ENCODE measurements at regions of chr17 and their contacts with region 1.

Region 1: DNA sequence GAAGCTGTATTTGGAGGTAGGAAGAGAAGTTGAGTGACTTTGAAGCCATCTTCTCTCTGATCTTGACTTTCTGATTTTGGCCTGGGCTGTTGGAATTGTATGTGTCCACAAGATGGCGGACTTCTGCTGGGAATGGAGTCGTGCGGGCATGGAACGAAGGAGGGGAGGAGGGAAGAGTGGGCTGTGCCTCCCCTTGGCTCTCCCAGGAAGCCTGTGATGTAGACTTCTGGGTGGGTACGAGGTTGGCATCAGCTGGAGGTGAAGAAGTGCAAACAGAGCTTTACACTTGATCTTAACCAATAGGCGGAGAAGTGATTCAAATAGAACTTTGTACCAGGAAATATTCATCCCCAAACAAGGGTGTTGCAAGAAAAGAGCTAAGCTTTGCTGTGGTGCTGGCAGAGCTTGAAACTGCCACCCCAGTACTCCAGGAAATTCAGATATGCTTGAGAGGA is 7.4 kb upstream of the TMEM220 start:
- DNase-seq: peak; percentile 55
- H3K27ac ChIP-seq: no peak overlapping the region
- CTCF ChIP-seq: peak; percentile 82

Region 2: GRCh38 chr17:10844621-10845387 is 107.6 kb after region 1 on chr17:
- CTCF ChIA-PET with region 1: interaction called, 11 read pairs
- POLR2A ChIA-PET with region 1: no interaction called
- DNase-seq: peak; percentile 66
- H3K27ac ChIP-seq: no peak overlapping the region
- CTCF ChIP-seq: peak; percentile 90